ENCODE measurements at regions of chr13 and their contacts with region 1.

Region 1: GRCh38 chr13:41492404-41493260 is 35.3 kb downstream of the RGCC start:
- DNase-seq: peak in 3 of 5 donors; percentile 60 to 73 (median 63)
- H3K4me3 ChIP-seq: peak overlapping the region; percentile 46
- H3K4me3 Mint-ChIP-seq: peak overlapping the region; percentile 13 to 86 (median 76)
- H3K27ac ChIP-seq: peak overlapping the region; percentile 65
- H3K27ac Mint-ChIP-seq: peak overlapping the region; percentile 95 to 99 (median 98)
- H3K4me1 ChIP-seq: peaks cover 72% of the 10 kb centered on the region
- H3K4me1 Mint-ChIP-seq: peaks cover 52 to 68% (median 65%) of the 10 kb centered on the region in 3 donors
- H3K27me3 ChIP-seq: no peaks in the 10 kb centered on the region
- H3K27me3 Mint-ChIP-seq: no peaks in the 10 kb centered on the region

Region 2: GRCh38 chr13:41465241-41465847 is 27.3 kb before region 1 on chr13:
- CTCF ChIA-PET with region 1: interaction called, 7 read pairs
- POLR2A ChIA-PET with region 1: interaction called, 15 read pairs
- DNase-seq: peak; percentile 73 to 95 (median 88)
- H3K4me3 ChIP-seq: peak overlapping the region; percentile 79
- H3K4me3 Mint-ChIP-seq: peak overlapping the region; percentile 78 to 95 (median 85)
- H3K27ac ChIP-seq: peak overlapping the region; percentile 91
- H3K27ac Mint-ChIP-seq: peak overlapping the region; percentile 93 to 99 (median 97)
- H3K4me1 ChIP-seq: peaks cover 92% of the 10 kb centered on the region
- H3K4me1 Mint-ChIP-seq: peaks cover 82 to 94% (median 86%) of the 10 kb centered on the region in 3 donors
- H3K27me3 ChIP-seq: no peaks in the 10 kb centered on the region
- H3K27me3 Mint-ChIP-seq: peaks cover 0 to 12% of the 10 kb centered on the region in 2 donors